ENCODE measurements at regions of chr10 and their contacts with region 1.

Region 1: DNA sequence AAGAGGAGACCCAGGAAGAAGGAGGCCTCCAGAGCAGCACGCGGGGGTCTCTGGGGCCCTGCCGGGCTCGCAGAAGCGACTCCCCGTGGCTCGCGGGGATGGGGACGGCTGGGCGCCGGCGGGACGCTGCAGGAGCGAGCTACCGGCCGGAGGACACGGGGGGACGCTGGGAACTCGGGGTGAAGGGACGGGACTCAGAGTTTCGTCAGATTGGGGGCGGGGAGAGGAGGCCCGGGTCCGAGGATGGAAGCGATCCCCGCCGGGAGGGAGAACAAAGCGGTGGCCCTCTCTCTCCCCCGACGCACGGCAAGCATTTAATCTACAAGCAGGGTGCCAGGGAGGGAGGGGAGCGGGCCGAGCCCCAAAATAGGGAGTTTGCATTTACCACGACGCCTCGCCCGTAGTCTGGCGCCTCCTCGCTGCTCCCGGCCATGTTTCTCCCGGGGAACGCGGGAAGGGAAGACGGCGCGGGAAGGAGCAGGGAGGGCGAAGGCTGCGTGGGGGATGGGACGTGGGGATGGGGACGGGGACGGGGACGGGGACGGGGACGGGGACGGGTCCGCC is at the start of gene PRTFDC1:
- DNase-seq: peak; percentile 49
- CTCF ChIP-seq: peak; percentile 30

Region 2: DNA sequence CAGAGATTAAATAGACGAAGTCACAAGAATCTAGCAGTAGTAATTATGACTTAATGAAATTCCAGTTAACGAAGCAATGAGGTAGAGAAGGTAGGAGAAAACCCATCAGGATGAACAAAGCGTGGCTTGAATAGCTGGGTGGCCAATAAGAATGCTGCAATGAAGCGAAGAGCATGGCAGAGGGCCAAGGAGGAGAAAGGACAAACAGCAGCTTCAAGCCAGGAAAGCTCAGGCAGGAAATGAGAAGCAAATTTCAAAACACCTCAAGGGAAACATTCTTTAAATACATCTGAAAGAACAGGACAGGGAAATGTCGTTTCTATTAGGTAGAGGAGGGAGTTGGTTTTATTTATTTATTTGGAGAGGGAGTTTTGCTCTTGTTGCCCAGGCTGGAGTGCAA is 620.8 kb before region 1 on chr10:
- CTCF ChIA-PET with region 1: no interaction called
- POLR2A ChIA-PET with region 1: no interaction called
- DNase-seq: no peak
- CTCF ChIP-seq: no peak

Region 3: GRCh38 chr10:24894309-24894708 is 57.9 kb before region 1 on chr10:
- CTCF ChIA-PET with region 1: no interaction called
- POLR2A ChIA-PET with region 1: interaction called, 12 read pairs
- DNase-seq: no peak
- CTCF ChIP-seq: no peak

Region 4: GRCh38 chr10:24938076-24938475 is 14.1 kb before region 1 on chr10:
- CTCF ChIA-PET with region 1: interaction called, 10 read pairs
- POLR2A ChIA-PET with region 1: interaction called, 6 read pairs
- DNase-seq: no peak
- CTCF ChIP-seq: no peak

Region 5: DNA sequence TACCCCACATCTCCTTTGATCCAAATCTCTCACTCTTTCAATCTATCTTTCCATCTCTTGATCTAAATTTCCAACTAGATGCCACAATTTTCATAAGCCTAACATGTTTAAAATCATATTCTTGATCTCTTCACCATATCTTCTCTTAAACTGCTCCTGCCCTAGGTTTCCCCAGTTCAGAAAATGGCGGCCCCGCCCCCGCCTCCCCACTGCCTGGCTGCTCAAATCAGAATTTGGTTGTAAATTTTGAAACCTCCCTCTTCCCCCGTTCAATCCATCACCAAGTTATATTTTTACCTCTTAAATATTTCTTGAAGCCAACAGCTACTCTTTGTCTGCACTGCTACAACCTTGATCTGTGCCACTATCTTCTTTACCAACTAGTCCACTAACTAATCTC is 27.5 kb after region 1 on chr10:
- CTCF ChIA-PET with region 1: no interaction called
- POLR2A ChIA-PET with region 1: no interaction called
- DNase-seq: no peak
- CTCF ChIP-seq: no peak

Region 6: GRCh38 chr10:24989867-24990266 is 37.6 kb after region 1 on chr10:
- CTCF ChIA-PET with region 1: no interaction called
- POLR2A ChIA-PET with region 1: no interaction called
- DNase-seq: no peak
- CTCF ChIP-seq: no peak

Measured in GM10248 (cell line).